Naive thymus-derived CD4-positive, alpha-beta T cell (primary cell): ENCODE measurements at regions of chr6 and their contacts with region 1.

Region 1: GRCh38 chr6:41278699-41279405 is 7.6 kb downstream of the TREM1 start:
- DNase-seq: peak in 8 of 9 donors; percentile 47 to 68 (median 62)
- ATAC-seq: peak; percentile 62
- H3K4me3 ChIP-seq: no peak overlapping the region
- H3K4me3 Mint-ChIP-seq: peak overlapping the region in 4 of 10 donors; percentile 11 to 53 (median 28)
- H3K27ac ChIP-seq: no peak overlapping the region
- H3K27ac Mint-ChIP-seq: peak overlapping the region in 1 of 9 donors; percentile 3
- H3K4me1 ChIP-seq: peaks cover 0 to 9% of the 10 kb centered on the region in 2 donors
- H3K4me1 Mint-ChIP-seq: peaks cover 11 to 22% (median 12%) of the 10 kb centered on the region in 7 donors
- H3K27me3 ChIP-seq: no peaks in the 10 kb centered on the region
- H3K27me3 Mint-ChIP-seq: peaks cover 0 to 23% (median 5%) of the 10 kb centered on the region in 5 donors

Region 2: DNA sequence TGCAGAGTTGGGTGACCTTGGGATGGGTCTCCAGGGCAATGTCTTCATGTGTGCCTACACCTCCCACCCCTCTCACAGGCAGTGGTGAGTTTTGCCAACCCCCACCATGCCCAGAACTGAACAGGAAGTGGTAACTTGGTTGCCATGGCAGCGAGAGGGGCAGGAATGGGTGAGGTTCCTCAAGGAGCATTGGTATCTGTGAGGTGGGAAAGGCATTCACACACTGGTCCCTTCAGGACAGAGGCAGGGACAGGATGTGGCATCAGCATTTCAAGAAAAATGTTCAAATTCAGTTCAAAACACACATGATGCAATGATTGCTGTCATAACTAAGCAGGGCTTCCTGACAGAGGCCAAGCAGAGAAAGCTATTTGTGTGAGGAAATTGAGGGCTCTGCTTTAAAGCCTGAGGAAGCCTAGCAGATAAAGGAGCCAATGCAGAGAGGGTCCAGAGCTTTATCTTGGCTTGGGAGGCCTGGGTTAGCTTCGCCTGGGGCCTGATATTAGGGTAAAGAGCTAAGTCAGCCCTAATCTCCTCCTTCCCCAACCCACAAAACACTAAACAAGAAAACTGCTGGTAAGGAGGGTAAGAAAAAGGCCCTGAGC is 78.5 kb before region 1 on chr6:
- CTCF ChIA-PET with region 1: no interaction called
- POLR2A ChIA-PET with region 1: no interaction called
- intact Hi-C with region 1: loop called in 1 of 2 experiments (anchors 1 kb)
- DNase-seq: peak; percentile 34 to 87 (median 78)
- ATAC-seq: peak; percentile 79
- H3K4me3 ChIP-seq: peak overlapping the region; percentile 26
- H3K4me3 Mint-ChIP-seq: peak overlapping the region; percentile 76 to 84 (median 82)
- H3K27ac ChIP-seq: peak overlapping the region; percentile 88
- H3K27ac Mint-ChIP-seq: peak overlapping the region; percentile 95 to 100 (median 98)
- H3K4me1 ChIP-seq: peaks cover 47 to 55% of the 10 kb centered on the region in 2 donors
- H3K4me1 Mint-ChIP-seq: peaks cover 52 to 93% (median 83%) of the 10 kb centered on the region in 7 donors
- H3K27me3 ChIP-seq: no peaks in the 10 kb centered on the region
- H3K27me3 Mint-ChIP-seq: no peaks in the 10 kb centered on the region

Region 3: DNA sequence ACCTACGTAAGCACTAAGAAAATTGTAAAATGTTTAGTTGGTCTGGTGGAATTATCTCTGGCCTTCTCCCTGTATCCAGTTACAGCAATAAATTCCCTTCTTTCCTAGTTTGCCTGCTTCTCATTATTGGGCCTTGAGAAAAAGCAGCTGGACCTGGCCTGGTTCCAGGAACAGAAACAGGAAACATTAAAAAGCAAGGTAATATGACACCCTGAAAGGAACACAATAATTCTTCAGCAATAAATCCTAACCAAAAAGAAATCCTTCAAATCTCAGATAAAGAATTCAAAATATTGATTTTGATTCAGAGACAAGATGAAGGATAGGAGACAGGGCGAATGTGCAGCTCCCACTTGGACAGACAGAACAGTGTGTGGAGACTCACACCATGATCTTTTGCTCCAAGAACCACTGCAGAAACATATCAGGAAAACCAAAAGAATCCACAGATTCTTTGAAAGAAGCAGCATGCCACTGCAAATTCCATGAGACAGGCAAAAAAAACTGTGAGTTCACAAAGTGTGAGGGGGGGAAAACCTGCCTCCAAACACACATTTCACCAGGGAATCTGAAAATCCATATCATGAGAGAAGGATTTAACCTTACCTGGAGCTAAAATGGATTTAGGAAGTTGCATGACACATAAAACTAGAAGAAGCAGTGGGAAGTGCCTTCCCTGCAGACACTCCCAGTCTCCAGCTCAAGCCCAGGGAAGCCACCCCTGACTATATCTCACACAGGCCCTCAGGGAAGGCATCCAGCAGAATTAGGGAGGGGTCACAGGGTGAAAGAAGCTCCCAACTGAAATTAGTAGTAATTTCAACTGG is 21.3 kb before region 1 on chr6:
- CTCF ChIA-PET with region 1: no interaction called
- POLR2A ChIA-PET with region 1: no interaction called
- intact Hi-C with region 1: no loop called
- DNase-seq: no peak
- ATAC-seq: no peak
- H3K4me3 ChIP-seq: no peak overlapping the region
- H3K4me3 Mint-ChIP-seq: no peak overlapping the region
- H3K27ac ChIP-seq: no peak overlapping the region
- H3K27ac Mint-ChIP-seq: peak overlapping the region in 1 of 9 donors; percentile 21
- H3K4me1 ChIP-seq: no peaks in the 10 kb centered on the region
- H3K4me1 Mint-ChIP-seq: peaks cover 0 to 13% (median 5%) of the 10 kb centered on the region in 7 donors
- H3K27me3 ChIP-seq: no peaks in the 10 kb centered on the region
- H3K27me3 Mint-ChIP-seq: peaks cover 0 to 24% (median 0%) of the 10 kb centered on the region in 5 donors

Region 4: GRCh38 chr6:41298785-41299502 is 20.1 kb after region 1 on chr6:
- CTCF ChIA-PET with region 1: interaction called, 4 read pairs
- POLR2A ChIA-PET with region 1: no interaction called
- intact Hi-C with region 1: loop called in 1 of 2 experiments (anchors 2 kb)
- DNase-seq: peak in 7 of 9 donors; percentile 60 to 85 (median 81)
- ATAC-seq: peak; percentile 94
- H3K4me3 ChIP-seq: peak overlapping the region; percentile 4
- H3K4me3 Mint-ChIP-seq: peak overlapping the region; percentile 56 to 91 (median 76)
- H3K27ac ChIP-seq: peak overlapping the region; percentile 22
- H3K27ac Mint-ChIP-seq: peak overlapping the region; percentile 80 to 98 (median 88)
- H3K4me1 ChIP-seq: peaks cover 18 to 21% of the 10 kb centered on the region in 2 donors
- H3K4me1 Mint-ChIP-seq: peaks cover 24 to 73% (median 57%) of the 10 kb centered on the region in 7 donors
- H3K27me3 ChIP-seq: no peaks in the 10 kb centered on the region
- H3K27me3 Mint-ChIP-seq: peaks cover 0 to 19% (median 0%) of the 10 kb centered on the region in 5 donors

Region 5: DNA sequence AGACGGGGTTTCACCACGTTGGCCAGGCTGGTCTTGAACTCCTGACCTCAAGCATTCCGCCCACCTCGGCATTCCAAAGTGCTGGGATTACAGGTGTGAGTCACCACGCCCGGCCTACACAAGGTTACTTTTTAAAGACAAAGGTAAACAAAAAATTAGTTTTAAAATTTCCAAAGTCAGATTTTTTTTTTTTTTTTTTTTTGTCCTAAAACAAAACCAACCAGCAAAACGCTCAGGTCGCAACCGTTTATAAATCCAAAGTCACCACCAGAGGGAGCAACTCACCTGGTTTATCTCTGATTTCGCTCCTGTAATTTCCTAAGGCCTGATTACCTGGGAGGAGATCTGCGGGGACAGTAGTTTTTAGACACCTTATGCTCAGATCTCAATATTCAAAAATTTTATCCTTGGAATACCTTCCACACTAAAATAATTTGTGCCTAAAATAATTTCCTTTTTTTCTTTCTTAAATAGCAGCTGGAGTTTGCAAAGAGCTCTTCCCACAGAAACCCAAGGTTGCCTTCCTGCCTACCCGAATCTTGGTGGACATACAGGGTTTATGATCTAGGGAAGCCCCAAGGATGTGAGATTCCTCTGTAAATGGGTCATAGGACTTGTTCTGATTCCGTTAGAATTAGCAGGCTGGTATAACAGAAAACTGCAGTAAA is 27.5 kb after region 1 on chr6:
- CTCF ChIA-PET with region 1: interaction called, 3 read pairs
- POLR2A ChIA-PET with region 1: no interaction called
- intact Hi-C with region 1: loop called in 1 of 2 experiments (anchors 1 kb)
- DNase-seq: peak in 7 of 9 donors; percentile 20 to 53 (median 35)
- ATAC-seq: no peak
- H3K4me3 ChIP-seq: no peak overlapping the region
- H3K4me3 Mint-ChIP-seq: no peak overlapping the region
- H3K27ac ChIP-seq: no peak overlapping the region
- H3K27ac Mint-ChIP-seq: no peak overlapping the region
- H3K4me1 ChIP-seq: no peaks in the 10 kb centered on the region
- H3K4me1 Mint-ChIP-seq: peaks cover 7 to 28% (median 20%) of the 10 kb centered on the region in 7 donors
- H3K27me3 ChIP-seq: no peaks in the 10 kb centered on the region
- H3K27me3 Mint-ChIP-seq: peaks cover 0 to 45% (median 0%) of the 10 kb centered on the region in 5 donors